HepG2 (cell line): ENCODE measurements at regions of chr20 and their contacts with region 1.

Region 1: DNA sequence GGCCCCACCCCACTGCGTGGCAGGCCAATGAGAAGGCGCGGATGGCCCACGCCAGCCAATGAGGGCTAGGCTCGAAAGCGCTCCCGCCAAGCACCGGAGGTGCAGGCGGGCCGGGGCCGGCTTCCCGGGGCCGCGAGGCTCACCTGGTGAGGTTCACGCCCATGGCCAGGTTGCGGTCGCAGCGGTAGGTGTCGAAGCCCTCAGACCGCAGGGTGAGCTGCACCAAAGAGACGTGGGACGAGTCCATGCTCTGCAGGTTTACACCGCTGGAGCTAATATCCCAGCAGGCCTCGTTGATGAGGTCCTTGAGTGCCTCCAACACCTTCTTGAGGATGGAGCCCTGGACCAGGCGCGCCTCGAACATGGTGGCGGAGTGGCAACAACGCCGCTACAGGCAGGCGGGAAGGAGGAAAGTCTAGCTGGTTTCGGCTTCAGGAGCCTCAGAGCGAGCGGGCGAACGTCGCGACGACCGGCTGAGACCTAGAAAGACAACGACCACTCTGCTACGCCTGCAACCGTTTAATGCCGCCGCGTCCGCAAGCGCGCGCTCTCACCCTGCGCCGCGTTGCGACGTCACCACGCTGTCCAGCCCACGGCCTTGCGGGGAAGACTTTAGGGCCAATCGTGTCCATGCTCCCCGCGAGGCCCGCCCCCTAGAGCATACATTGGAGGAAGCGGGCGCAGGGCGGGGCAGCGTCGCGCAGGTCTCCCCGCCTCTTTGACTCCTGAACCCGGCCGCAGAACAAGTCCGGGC is at the start of gene PCNA:
- DNase-seq: peak; percentile 100
- ATAC-seq: peak; percentile 96
- H3K4me3 ChIP-seq: peak within 1 kb of the TSS; percentile 82 to 92 (median 83)
- H3K27ac ChIP-seq: peak within 1 kb of the TSS; percentile 86
- H3K4me1 ChIP-seq: peaks cover 50% of the 10 kb centered on the region
- H3K27me3 ChIP-seq: no peaks in the 10 kb centered on the region; a peak in 1 of 5 replicates
- CTCF ChIP-seq: peak; percentile 49
- EP300 ChIP-seq: peak; percentile 14 to 16; a peak in 2 of 4 replicates
- POLR2A ChIP-seq: peak; percentile 100
- RAD21 ChIP-seq: peak; percentile 52
- total RNA-seq, gene PCNA: 655 and 1,008 TPM in 2 replicates

Region 2: DNA sequence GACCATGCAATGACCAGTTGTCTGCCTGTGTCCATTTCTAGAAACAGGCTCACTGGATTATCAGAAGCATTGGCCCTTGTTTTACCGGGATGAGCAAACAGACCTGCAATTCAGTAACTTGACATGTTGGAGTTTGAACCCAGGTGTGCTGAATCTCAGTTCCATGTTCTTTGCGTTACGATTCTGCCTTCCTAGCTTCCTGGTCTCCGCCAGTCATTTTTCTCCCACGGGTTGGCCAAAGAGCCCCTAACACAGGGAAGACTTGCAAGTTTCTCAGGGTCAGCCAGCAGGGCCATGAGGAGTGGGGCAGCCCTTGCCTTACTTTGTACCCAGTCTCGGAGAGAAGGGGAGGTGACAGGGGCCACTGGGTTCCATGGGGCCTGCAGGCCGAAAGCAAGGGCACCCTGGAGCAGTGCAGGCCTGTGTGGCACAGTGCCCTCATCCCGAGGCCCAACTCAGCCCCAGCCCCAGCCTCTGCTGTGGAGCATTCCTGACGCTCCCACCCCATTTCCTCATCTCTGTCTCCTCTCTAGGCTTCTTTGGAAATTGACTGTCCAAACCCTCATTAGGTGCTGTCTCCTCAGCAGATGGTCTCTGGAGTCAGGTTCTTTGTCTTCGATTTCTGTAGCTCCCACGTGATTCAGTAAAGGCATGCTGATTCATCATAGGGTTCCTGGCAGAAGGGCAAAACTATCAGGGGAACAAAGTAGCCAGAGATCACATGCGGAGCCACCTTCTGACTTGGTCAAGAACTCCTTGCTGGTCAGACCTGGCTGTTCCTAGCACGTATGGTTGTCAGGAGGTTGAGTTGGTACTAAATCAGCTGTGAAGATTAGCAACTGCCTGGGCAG is 30.8 kb after region 1 on chr20:
- CTCF ChIA-PET with region 1: no interaction called
- POLR2A ChIA-PET with region 1: interaction called, 176 read pairs
- in situ Hi-C with region 1: no loop called
- intact Hi-C with region 1: loop called (anchors 1 kb)
- DNase-seq: peak; percentile 96
- ATAC-seq: peak; percentile 75
- H3K4me3 ChIP-seq: peak overlapping the region; percentile 21 to 47 (median 21); a peak in 5 of 6 replicates
- H3K27ac ChIP-seq: peak overlapping the region; percentile 87
- H3K4me1 ChIP-seq: peaks cover 100% of the 10 kb centered on the region
- H3K27me3 ChIP-seq: no peaks in the 10 kb centered on the region
- CTCF ChIP-seq: no peak
- EP300 ChIP-seq: peak; percentile 46 to 71; a peak in 3 of 4 replicates
- POLR2A ChIP-seq: peak; percentile 57 to 77; a peak in 3 of 4 replicates
- RAD21 ChIP-seq: no peak; the same call in 1 of the 2 replicates

Region 3: GRCh38 chr20:5181956-5182355 is 62.3 kb after region 1 on chr20:
- CTCF ChIA-PET with region 1: no interaction called
- POLR2A ChIA-PET with region 1: interaction called, 14 read pairs
- in situ Hi-C with region 1: no loop called
- intact Hi-C with region 1: no loop called
- DNase-seq: no peak
- ATAC-seq: no peak
- H3K4me3 ChIP-seq: no peak overlapping the region
- H3K27ac ChIP-seq: no peak overlapping the region
- H3K4me1 ChIP-seq: peaks cover 27% of the 10 kb centered on the region
- H3K27me3 ChIP-seq: no peaks in the 10 kb centered on the region
- CTCF ChIP-seq: no peak
- EP300 ChIP-seq: no peak
- POLR2A ChIP-seq: no peak
- RAD21 ChIP-seq: no peak